ENCODE measurements at regions of chr12 and their contacts with region 1.

Region 1: GRCh38 chr12:117025481-117026151 is 73.6 kb downstream of the TESC start:
- DNase-seq: peak; percentile 22
- H3K4me3 Mint-ChIP-seq: no peak overlapping the region
- H3K27ac Mint-ChIP-seq: peak overlapping the region; percentile 61
- H3K4me1 Mint-ChIP-seq: peaks cover 3% of the 10 kb centered on the region
- H3K27me3 Mint-ChIP-seq: no peaks in the 10 kb centered on the region

Region 2: GRCh38 chr12:117045160-117046010 is 19.8 kb after region 1 on chr12:
- intact Hi-C with region 1: no loop called
- DNase-seq: no peak
- H3K4me3 Mint-ChIP-seq: no peak overlapping the region
- H3K27ac Mint-ChIP-seq: no peak overlapping the region
- H3K4me1 Mint-ChIP-seq: no peaks in the 10 kb centered on the region
- H3K27me3 Mint-ChIP-seq: no peaks in the 10 kb centered on the region

Region 3: GRCh38 chr12:117139025-117139717 is 113.6 kb after region 1 on chr12:
- intact Hi-C with region 1: loop called (anchors 5 kb)
- DNase-seq: no peak
- H3K4me3 Mint-ChIP-seq: no peak overlapping the region
- H3K27ac Mint-ChIP-seq: no peak overlapping the region
- H3K4me1 Mint-ChIP-seq: peaks cover 8% of the 10 kb centered on the region
- H3K27me3 Mint-ChIP-seq: no peaks in the 10 kb centered on the region